Mucosa of descending colon (tissue), 3 donors: ENCODE measurements at regions of chr12 and their contacts with region 1.

Region 1: GRCh38 chr12:130041983-130042812 is 120.1 kb upstream of the FZD10 start:
- DNase-seq: peak in 2 of 3 donors; percentile 47 to 49
- ATAC-seq: peak; percentile 51
- H3K4me3 ChIP-seq: no peak overlapping the region
- H3K4me1 ChIP-seq: no peaks in the 10 kb centered on the region
- CTCF ChIP-seq: peak; percentile 54

Region 2: GRCh38 chr12:129535351-129535750 is 506.8 kb before region 1 on chr12:
- intact Hi-C with region 1: no loop called
- DNase-seq: no peak
- ATAC-seq: no peak
- H3K4me3 ChIP-seq: no peak overlapping the region
- H3K4me1 ChIP-seq: no peaks in the 10 kb centered on the region
- CTCF ChIP-seq: no peak

Region 3: GRCh38 chr12:129706716-129707115 is 335.5 kb before region 1 on chr12:
- intact Hi-C with region 1: no loop called
- DNase-seq: no peak
- ATAC-seq: no peak
- H3K4me3 ChIP-seq: no peak overlapping the region
- H3K4me1 ChIP-seq: no peaks in the 10 kb centered on the region
- CTCF ChIP-seq: no peak

Region 4: DNA sequence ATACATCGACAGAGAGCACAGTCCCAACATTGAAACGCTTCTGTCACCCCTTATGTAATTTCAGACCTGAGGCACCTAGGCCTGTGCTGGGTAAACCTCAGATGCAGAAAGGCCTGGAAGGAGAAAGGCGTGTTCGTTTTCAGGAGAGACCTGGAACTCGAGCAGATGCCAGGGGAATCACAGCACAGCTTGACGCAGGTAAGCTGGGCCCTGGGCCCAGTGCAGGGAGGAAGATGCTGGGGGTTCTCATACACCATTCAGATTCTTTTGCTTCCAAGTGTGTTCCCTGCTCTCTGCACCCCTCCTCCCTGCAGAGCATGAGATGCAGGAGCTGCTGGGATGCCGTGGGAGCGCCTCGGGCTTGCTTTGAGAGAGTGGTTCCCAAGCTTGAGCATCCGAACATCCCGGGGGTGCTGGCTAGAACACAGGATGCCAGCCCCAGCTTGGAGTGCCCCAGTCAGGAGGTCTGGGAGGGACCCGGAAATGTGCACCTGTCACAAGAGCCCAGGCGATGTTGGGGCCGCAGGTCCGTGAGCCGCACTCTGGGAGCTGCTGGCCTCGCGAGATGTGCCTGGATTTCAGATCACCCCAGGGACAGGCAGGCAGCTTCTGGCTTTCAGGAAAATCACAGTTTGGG is 155.9 kb after region 1 on chr12:
- intact Hi-C with region 1: no loop called
- DNase-seq: no peak
- ATAC-seq: no peak
- H3K4me3 ChIP-seq: no peak overlapping the region
- H3K4me1 ChIP-seq: no peaks in the 10 kb centered on the region
- CTCF ChIP-seq: no peak

Region 5: DNA sequence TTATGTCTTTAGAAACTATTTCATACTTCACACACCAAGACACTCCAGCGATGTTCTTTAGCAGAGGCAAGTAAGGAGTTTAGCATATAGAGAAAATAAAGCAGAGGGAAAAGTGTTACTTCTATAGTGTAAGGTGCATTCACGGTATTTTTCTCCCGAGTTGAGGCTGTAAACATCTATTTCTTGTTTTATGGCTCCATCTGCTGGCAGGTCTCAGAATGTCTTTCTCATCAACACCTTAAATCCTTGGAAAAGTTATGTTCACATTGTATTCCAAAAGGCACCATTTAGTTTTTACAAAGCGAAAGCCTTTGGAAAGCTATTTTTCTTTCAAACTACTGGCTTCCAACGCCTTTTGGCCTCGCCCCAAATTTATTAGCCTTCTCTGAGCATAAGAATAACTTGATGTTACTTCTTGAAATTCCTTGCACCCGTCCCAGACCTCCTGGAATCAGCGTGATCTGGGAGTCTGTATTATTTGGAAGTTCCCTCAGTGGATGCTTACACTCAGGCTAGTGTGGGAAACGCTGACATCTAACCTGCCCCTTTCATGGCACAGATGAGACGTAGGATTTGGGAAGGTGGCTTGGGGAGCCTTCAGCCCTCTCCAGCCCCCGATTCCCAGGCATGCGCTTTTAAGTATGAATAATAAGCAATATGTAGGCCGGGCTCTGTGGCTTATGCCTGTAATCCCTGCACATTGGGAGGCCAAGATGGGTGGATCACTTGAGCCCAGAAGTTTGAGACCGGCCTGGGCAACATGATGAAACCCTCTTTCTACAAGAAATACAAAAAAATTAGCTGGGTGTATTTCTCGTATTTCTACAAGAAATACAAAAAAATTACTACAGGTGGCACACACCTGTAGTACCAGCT is 293.6 kb after region 1 on chr12:
- intact Hi-C with region 1: loop called (anchors 5 kb)
- DNase-seq: peak in 1 of 3 donors; percentile 83
- ATAC-seq: peak; percentile 42
- H3K4me3 ChIP-seq: no peak overlapping the region
- H3K4me1 ChIP-seq: peaks cover 3% of the 10 kb centered on the region
- CTCF ChIP-seq: peak; percentile 22

Region 6: GRCh38 chr12:130747867-130748740 is 705.9 kb after region 1 on chr12:
- intact Hi-C with region 1: loop called in 1 of 2 experiments (anchors 10 kb)
- DNase-seq: peak in 2 of 3 donors; percentile 82 to 93
- ATAC-seq: peak; percentile 87
- H3K4me3 ChIP-seq: no peak overlapping the region
- H3K4me1 ChIP-seq: no peaks in the 10 kb centered on the region
- CTCF ChIP-seq: peak; percentile 58